GM12878 (cell line): ENCODE measurements at regions of chr9 and their contacts with region 1.

Region 1: DNA sequence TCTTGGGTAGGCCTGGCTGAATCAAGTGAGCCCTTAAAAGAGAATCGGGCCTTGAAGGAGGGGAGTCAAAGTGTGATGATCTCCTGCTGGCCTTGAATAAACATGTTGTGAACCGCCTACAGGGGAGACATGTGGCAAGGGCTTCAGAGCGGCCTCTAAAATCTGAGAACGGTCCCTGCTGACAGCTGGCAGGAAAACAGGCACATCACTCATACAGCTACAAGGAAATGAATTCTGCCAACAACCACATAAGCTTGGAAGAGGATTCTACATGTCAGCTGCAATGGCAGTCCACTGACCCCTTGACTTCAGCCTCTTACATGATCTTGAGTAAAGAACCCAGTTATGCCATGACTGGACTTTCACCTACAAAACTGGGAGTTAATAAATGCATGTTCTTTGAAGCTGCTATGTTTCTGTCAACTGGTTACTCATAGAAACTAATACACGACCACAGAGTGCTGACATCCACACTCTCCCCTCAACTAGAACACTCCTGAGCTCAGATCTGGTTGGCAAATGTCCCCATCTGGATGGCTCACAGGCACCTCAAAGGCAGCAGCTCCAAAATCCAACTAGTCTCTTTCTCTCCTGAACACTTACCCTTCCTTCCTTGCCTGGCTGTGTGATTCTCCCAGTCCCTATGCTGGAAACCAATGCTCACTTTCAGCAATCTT is 333.1 kb downstream of the ASTN2 start:
- DNase-seq: no peak
- ATAC-seq: peak; percentile 44; the same call in 2 of the 3 replicates
- H3K4me3 ChIP-seq: no peak overlapping the region
- H3K27ac ChIP-seq: no peak overlapping the region
- H3K4me1 ChIP-seq: no peaks in the 10 kb centered on the region
- H3K27me3 ChIP-seq: no peaks in the 10 kb centered on the region; a peak in 1 of 4 replicates
- CTCF ChIP-seq: no peak
- EP300 ChIP-seq: no peak
- POLR2A ChIP-seq: no peak
- RAD21 ChIP-seq: no peak

Region 2: DNA sequence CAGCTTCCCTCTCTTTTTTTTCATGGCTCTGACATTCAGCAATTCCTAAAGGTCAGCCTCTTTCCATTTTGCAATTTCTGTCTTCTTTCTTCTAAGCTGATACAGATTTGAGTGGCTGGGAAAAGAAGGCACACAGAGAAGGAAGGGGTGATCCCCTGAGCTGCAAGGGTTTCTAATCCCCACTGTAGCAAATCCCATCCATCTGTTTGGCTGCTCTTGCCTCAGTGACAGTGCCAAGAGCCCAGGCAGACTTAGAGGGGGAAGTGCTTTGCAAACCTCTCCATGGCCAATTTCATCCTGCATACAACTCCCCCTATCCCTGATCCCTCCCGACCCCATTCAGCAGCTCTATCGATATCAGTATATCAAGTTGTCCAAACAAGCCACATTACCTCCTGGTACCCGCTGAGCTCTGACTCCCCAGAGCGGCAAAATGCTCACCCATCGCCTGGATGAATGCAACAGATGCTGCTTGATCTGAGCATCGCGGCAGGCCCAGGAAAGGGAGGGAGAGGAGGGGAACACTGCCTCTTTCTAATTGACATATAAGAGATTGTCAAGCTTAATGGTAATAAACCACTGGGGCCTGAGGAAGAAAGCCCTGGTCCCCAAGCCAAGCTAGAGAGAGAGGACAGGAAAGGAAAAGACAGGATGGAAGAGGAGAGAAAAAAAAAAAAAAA is 64.2 kb after region 1 on chr9:
- CTCF ChIA-PET with region 1: no interaction called
- POLR2A ChIA-PET with region 1: no interaction called
- RAD21 ChIA-PET with region 1: no interaction called
- SMC1A ChIA-PET with region 1: no interaction called
- in situ Hi-C with region 1: loop called (anchors 10 kb)
- intact Hi-C with region 1: no loop called
- DNase-seq: no peak
- ATAC-seq: no peak
- H3K4me3 ChIP-seq: no peak overlapping the region
- H3K27ac ChIP-seq: no peak overlapping the region
- H3K4me1 ChIP-seq: no peaks in the 10 kb centered on the region
- H3K27me3 ChIP-seq: peaks cover 0 to 2% of the 10 kb centered on the region in 2 experiments; a peak in 1 of 4 replicates
- CTCF ChIP-seq: no peak
- EP300 ChIP-seq: no peak
- POLR2A ChIP-seq: no peak
- RAD21 ChIP-seq: no peak

Region 3: GRCh38 chr9:117218951-117219350 is 137.2 kb after region 1 on chr9:
- CTCF ChIA-PET with region 1: no interaction called
- POLR2A ChIA-PET with region 1: no interaction called
- RAD21 ChIA-PET with region 1: no interaction called
- SMC1A ChIA-PET with region 1: no interaction called
- in situ Hi-C with region 1: no loop called
- intact Hi-C with region 1: no loop called
- DNase-seq: no peak
- ATAC-seq: no peak
- H3K4me3 ChIP-seq: no peak overlapping the region
- H3K27ac ChIP-seq: no peak overlapping the region
- H3K4me1 ChIP-seq: no peaks in the 10 kb centered on the region
- H3K27me3 ChIP-seq: no peaks in the 10 kb centered on the region; a peak in 1 of 4 replicates
- CTCF ChIP-seq: no peak
- EP300 ChIP-seq: no peak
- POLR2A ChIP-seq: no peak
- RAD21 ChIP-seq: no peak

Region 4: GRCh38 chr9:117325831-117326230 is 244.1 kb after region 1 on chr9:
- CTCF ChIA-PET with region 1: no interaction called
- POLR2A ChIA-PET with region 1: no interaction called
- RAD21 ChIA-PET with region 1: no interaction called
- SMC1A ChIA-PET with region 1: no interaction called
- in situ Hi-C with region 1: no loop called
- intact Hi-C with region 1: no loop called
- DNase-seq: no peak
- ATAC-seq: no peak
- H3K4me3 ChIP-seq: no peak overlapping the region
- H3K27ac ChIP-seq: no peak overlapping the region
- H3K4me1 ChIP-seq: no peaks in the 10 kb centered on the region
- H3K27me3 ChIP-seq: no peaks in the 10 kb centered on the region
- CTCF ChIP-seq: no peak
- EP300 ChIP-seq: no peak
- POLR2A ChIP-seq: no peak
- RAD21 ChIP-seq: no peak